ENCODE measurements at regions of chr15 and their contacts with region 1.

Region 1: GRCh38 chr15:93001881-93002280 is 87.1 kb downstream of the RGMA start:
- DNase-seq: no peak
- H3K4me3 ChIP-seq: no peak overlapping the region
- CTCF ChIP-seq: peak; percentile 26

Region 2: DNA sequence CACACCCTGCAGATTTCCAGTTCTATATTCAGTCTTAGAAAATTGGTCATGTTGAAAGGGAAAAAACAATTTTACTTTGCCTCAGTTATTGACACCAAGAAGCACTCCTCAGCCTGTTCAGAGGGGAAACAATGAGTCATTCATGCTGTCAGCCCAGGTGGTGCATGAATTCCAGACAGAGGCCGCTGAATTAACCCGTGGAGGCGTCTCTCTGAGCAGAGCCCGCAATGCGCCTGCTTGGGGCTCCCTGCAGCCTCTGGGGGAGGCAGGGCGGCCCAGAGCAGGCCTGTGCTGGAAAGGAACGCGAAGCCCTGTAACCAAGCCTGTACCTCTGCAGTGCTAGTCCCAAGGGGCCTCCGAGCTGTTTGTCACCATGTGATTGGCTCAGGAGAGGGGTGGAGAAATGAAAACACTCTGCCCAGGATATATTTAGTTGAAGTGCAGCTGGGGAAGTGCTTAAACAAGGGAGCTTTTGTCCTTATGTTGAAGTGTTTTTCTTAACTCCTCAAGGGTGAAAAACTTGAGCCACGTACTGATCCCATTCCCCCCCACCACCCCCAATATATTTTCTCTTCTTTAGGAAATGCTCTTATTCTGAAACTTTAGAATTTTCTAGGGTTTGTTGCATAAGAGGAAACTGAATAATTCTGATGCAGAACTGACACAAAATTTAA is 170.1 kb before region 1 on chr15:
- in situ Hi-C with region 1: no loop called
- DNase-seq: peak; percentile 95
- H3K4me3 ChIP-seq: peak overlapping the region; percentile 2
- CTCF ChIP-seq: no peak

Region 3: GRCh38 chr15:92942706-92943105 is 59.2 kb before region 1 on chr15:
- in situ Hi-C with region 1: loop called (anchors 5 kb)
- DNase-seq: no peak
- H3K4me3 ChIP-seq: no peak overlapping the region
- CTCF ChIP-seq: peak; percentile 3

Measured in astrocyte of the cerebellum (primary cell).